ENCODE measurements at regions of chr2 and their contacts with region 1.

Region 1: DNA sequence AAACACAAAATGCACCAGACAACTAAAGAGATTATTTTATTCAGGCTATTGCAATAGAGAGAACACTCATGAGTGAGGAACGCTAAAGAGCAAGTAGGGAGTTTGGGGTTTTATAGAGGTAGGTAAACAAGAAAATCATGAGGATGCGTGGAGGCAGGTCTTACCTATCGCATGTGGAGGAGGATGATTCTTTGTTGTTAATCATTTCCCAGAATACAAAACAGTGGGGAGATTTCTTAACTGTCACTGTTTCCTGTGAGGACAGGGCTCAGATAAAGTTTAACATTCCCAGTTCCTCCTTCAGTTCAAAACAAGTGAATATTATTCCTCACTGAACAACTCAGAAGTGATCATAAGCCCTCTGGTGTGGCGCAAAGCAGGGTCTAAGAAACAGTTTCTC is 156.1 kb upstream of the MGAT5 start:
- DNase-seq: no peak
- ATAC-seq: no peak

Region 2: GRCh38 chr2:133892352-133892913 is 205.3 kb before region 1 on chr2:
- intact Hi-C with region 1: loop called (anchors 10 kb)
- DNase-seq: no peak
- ATAC-seq: no peak

Measured in Right ventricle myocardium superior (tissue), 1 donor.